ENCODE measurements at regions of chr17 and their contacts with region 1.

Region 1: DNA sequence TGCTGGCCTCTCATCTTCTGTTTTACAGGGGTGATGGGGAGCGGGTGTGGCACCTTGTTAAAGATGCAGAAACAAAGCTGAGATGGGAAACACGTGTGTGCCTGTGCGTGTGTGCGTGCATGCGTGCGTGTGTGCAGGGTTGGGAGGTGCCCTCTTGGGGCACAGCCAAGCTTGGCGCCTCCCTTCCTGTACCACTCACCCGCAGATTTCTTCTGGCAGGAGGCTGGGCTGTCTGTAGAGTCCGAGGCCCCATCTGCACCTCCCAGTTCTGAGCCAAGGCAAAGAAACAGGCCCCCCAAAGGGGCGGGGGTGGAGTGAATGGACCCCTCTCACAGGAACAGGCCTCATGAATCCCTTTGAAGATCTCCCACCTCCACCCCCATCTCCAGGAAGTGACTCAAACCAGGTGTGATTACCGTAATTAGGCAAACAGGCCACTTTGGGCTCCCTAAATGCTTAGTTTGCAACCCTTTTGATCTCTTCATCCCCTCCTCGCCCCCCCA is 20.9 kb downstream of the TNS4 start:
- DNase-seq: no peak
- H3K4me3 ChIP-seq: no peak overlapping the region
- H3K27ac ChIP-seq: no peak overlapping the region
- H3K4me1 ChIP-seq: no peaks in the 10 kb centered on the region
- H3K27me3 ChIP-seq: peaks cover 0 to 2% of the 10 kb centered on the region in 2 experiments
- CTCF ChIP-seq: no peak
- POLR2A ChIP-seq: no peak

Region 2: GRCh38 chr17:40362696-40363110 is 117.8 kb before region 1 on chr17:
- CTCF ChIA-PET with region 1: interaction called, 41 read pairs
- POLR2A ChIA-PET with region 1: no interaction called
- dilution Hi-C with region 1: no loop called
- intact Hi-C with region 1: loop called (anchors 1 kb)
- DNase-seq: peak; percentile 71
- H3K4me3 ChIP-seq: peak overlapping the region in 1 of 3 experiments; percentile 41
- H3K27ac ChIP-seq: no peak overlapping the region
- H3K4me1 ChIP-seq: peaks cover 7% of the 10 kb centered on the region
- H3K27me3 ChIP-seq: no peaks in the 10 kb centered on the region
- CTCF ChIP-seq: peak; percentile 85 to 88
- POLR2A ChIP-seq: no peak

Region 3: DNA sequence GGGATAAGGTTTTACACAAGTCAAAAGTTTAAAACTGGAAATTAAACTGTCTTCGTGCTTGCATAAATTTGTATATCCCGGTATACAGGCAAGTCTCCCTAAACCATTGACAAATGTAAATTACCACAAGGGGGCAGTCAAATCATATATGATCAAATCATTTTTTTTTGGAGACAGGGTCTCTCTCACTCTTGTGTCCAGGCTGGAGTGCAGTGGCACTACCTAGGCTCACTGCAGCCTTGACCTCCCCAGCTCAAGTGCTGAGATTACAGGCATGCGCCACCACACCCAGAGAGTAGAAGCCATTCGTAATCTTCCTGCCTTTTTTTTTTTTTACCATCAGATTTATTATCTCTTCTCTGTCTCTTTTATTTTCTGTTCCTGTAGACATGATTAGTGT is 81.4 kb before region 1 on chr17:
- CTCF ChIA-PET with region 1: interaction called, 7 read pairs
- POLR2A ChIA-PET with region 1: no interaction called
- dilution Hi-C with region 1: no loop called
- intact Hi-C with region 1: loop called (anchors 1 kb)
- DNase-seq: no peak
- H3K4me3 ChIP-seq: no peak overlapping the region
- H3K27ac ChIP-seq: no peak overlapping the region
- H3K4me1 ChIP-seq: no peaks in the 10 kb centered on the region
- H3K27me3 ChIP-seq: no peaks in the 10 kb centered on the region
- CTCF ChIP-seq: peak; percentile 35 to 44
- POLR2A ChIP-seq: no peak

Region 4: DNA sequence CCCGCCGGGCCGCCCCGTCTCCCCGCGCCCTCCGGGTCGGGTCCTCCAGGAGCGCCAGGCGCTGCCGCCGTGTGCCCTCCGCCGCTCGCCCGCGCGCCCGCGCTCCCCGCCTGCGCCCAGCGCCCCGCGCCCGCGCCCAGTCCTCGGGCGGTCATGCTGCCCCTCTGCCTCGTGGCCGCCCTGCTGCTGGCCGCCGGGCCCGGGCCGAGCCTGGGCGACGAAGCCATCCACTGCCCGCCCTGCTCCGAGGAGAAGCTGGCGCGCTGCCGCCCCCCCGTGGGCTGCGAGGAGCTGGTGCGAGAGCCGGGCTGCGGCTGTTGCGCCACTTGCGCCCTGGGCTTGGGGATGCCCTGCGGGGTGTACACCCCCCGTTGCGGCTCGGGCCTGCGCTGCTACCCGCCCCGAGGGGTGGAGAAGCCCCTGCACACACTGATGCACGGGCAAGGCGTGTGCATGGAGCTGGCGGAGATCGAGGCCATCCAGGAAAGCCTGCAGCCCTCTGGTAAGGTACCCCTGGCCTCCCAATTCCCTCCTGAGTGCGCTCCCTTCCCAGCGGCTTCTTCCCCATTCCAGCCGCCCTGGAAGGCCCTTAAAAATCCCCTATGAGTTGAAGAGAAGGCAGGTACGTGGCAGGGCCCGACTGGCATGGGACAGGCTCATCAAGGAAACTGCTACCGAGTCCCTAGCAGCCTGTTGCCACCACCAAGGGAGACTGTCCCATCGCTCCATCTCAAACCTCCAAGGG is 36.8 kb before region 1 on chr17:
- CTCF ChIA-PET with region 1: interaction called, 143 read pairs
- POLR2A ChIA-PET with region 1: interaction called, 7 read pairs
- dilution Hi-C with region 1: no loop called
- intact Hi-C with region 1: loop called (anchors 1 kb)
- DNase-seq: peak; percentile 69
- H3K4me3 ChIP-seq: peak overlapping the region; percentile 51 to 92 (median 58)
- H3K27ac ChIP-seq: peak overlapping the region; percentile 43
- H3K4me1 ChIP-seq: peaks cover 40% of the 10 kb centered on the region
- H3K27me3 ChIP-seq: no peaks in the 10 kb centered on the region
- CTCF ChIP-seq: peak; percentile 45 to 76
- POLR2A ChIP-seq: no peak

Region 5: GRCh38 chr17:40536295-40537171 is 56.0 kb after region 1 on chr17:
- CTCF ChIA-PET with region 1: interaction called, 148 read pairs
- POLR2A ChIA-PET with region 1: interaction called, 3 read pairs
- dilution Hi-C with region 1: no loop called
- intact Hi-C with region 1: loop called (anchors 1 kb)
- DNase-seq: peak; percentile 91
- H3K4me3 ChIP-seq: no peak overlapping the region
- H3K27ac ChIP-seq: peak overlapping the region; percentile 70
- H3K4me1 ChIP-seq: peaks cover 43% of the 10 kb centered on the region
- H3K27me3 ChIP-seq: no peaks in the 10 kb centered on the region
- CTCF ChIP-seq: no peak
- POLR2A ChIP-seq: peak; percentile 53